ENCODE measurements at regions of chr11 and their contacts with region 1.

Region 1: GRCh38 chr11:2151500-2152257 is 9.3 kb downstream of the INS start:
- DNase-seq: no peak
- H3K4me3 ChIP-seq: no peak overlapping the region
- H3K27me3 ChIP-seq: peaks cover 11% of the 10 kb centered on the region
- CTCF ChIP-seq: peak; percentile 76

Region 2: DNA sequence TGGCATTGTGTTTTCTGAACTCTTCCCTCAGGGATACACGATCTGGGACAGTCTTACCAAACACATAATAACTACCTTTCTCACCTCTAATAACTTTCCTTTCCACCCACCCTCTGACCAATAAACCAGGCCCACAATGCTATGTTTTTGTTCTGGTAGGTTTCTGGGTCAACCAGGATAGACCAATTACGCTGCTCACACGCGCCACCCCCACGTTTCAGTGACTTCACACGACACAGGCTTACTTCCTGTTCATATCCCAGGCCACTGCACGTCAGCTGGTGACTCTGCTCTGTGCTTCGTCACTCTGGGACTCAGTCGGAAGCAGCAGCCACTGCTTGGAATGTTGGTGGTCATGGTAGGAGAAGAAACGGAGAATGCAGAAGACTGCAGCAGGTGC is 532.2 kb before region 1 on chr11:
- CTCF ChIA-PET with region 1: no interaction called
- POLR2A ChIA-PET with region 1: no interaction called
- DNase-seq: no peak
- H3K4me3 ChIP-seq: no peak overlapping the region
- H3K27me3 ChIP-seq: peaks cover 2% of the 10 kb centered on the region
- CTCF ChIP-seq: no peak

Region 3: GRCh38 chr11:1694064-1694845 is 457.4 kb before region 1 on chr11:
- CTCF ChIA-PET with region 1: interaction called, 106 read pairs
- POLR2A ChIA-PET with region 1: no interaction called
- DNase-seq: no peak
- H3K4me3 ChIP-seq: no peak overlapping the region
- H3K27me3 ChIP-seq: peaks cover 14% of the 10 kb centered on the region
- CTCF ChIP-seq: peak; percentile 93

Region 4: GRCh38 chr11:1845561-1846452 is 305.9 kb before region 1 on chr11:
- CTCF ChIA-PET with region 1: interaction called, 19 read pairs
- POLR2A ChIA-PET with region 1: no interaction called
- DNase-seq: no peak
- H3K4me3 ChIP-seq: no peak overlapping the region
- H3K27me3 ChIP-seq: no peaks in the 10 kb centered on the region; the same call in none of the 2 replicates
- CTCF ChIP-seq: no peak

Region 5: GRCh38 chr11:1946812-1947484 is 204.7 kb before region 1 on chr11 and contains the start of gene MRPL23:
- CTCF ChIA-PET with region 1: interaction called, 85 read pairs
- POLR2A ChIA-PET with region 1: no interaction called
- DNase-seq: no peak
- H3K4me3 ChIP-seq: no peak within 1 kb of the TSS
- H3K27me3 ChIP-seq: no peaks in the 10 kb centered on the region
- CTCF ChIP-seq: no peak
- polyA plus RNA-seq, gene MRPL23: 39.8 and 43.5 TPM in 2 replicates

Region 6: GRCh38 chr11:2036863-2037486 is 114.7 kb before region 1 on chr11:
- CTCF ChIA-PET with region 1: interaction called, 1,066 read pairs
- POLR2A ChIA-PET with region 1: interaction called, 3 read pairs
- DNase-seq: no peak
- H3K4me3 ChIP-seq: no peak overlapping the region
- H3K27me3 ChIP-seq: no peaks in the 10 kb centered on the region
- CTCF ChIP-seq: no peak

Region 7: DNA sequence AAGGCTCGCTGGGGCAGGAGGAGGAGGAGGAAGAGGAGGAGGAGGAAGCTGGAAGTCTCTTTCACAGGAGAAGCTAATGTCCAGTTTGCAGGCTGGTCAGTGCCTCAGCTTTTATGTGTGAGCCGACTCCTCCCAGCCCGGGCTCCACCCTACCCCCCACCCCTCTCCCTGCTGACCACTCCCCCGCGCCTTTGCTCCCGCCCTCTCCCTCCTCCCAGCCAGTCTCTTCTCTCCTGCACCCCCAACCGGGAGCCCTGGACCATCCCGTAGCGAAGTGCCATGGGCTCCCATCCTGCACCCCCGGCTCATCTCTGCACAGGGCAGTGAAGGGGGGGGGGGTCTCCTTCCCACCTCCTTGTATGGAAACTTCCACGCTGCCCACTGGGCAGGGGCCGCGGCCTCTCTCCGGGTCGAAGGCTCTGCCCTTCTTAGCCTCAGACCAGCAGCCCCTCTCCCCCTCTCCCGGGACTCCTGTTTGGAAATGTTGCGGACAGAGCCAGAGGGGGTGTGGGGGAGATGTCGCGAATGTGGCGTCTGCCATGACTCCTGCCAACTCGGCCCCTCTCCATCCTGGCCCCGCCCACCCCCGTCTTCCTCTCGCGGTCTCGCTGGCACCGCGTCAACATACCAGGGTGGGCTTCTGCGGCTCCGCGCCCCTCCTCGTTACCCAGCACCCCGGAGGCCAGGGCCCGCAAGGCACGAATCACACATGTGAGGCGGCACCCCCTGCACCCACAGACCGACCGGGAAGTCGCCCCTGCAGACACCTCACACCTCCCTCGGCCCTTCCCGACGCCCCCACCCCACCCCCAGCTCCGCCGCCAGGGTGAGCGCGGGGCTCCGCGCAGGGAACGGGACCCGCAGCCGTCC is 14.2 kb before region 1 on chr11:
- CTCF ChIA-PET with region 1: interaction called, 58 read pairs
- POLR2A ChIA-PET with region 1: interaction called, 3 read pairs
- DNase-seq: peak; percentile 35
- H3K4me3 ChIP-seq: peak overlapping the region; percentile 58
- H3K27me3 ChIP-seq: peaks cover 14% of the 10 kb centered on the region
- CTCF ChIP-seq: no peak

Measured in BJ (cell line).